Left lung (tissue), 14 donors: ENCODE measurements at regions of chr16 and their contacts with region 1.

Region 1: DNA sequence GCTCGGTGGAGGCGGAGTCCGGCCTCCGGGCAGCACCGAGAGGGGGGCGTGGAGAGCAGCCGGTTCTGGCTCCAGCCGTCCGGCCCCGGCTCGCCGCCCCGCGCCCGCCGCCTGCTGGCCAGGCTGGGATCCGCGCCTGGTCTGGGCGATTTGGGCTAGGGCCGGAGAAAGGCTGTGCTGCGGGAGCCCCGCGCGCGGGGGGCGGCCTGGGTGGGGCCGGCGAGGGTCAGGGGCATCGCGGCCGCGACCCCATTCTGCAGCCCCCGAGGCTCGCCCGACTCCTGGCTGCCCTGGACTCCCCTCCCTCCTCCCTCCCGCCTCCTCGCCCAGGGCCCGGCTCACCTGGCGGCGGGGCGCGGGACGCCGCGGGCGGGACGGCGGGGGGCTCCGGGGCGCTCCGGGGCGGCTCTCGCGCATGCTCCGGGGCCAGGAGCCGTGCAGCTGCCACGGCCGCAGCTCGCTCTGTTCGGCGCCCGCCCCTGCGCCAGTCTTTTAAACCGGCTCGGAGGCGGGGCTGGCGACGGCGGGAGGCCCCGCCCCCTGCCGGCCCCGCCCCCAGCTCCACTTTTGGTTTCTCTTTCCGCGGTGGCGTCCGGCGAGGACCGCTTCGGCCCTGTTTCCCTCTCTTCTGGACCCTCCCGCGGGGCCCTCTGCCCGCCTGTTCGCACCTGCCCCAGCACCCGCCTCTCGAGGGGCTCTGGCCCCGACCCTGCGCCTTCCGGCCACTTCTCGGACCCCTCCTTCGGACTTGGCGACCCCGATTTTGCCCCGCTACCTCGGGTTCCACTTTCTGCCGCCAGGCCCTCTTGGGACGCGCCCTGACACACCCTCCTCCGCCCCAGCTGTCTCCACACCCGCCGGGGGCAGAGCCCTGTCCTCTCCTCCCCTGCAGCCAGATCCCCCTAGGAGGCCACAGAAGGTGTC is at the start of gene SOCS1:
- DNase-seq: peak; percentile 89 to 97 (median 91)
- ATAC-seq: peak; percentile 77
- H3K4me3 ChIP-seq: peak within 1 kb of the TSS; percentile 74 to 92
- H3K27ac ChIP-seq: peak within 1 kb of the TSS; percentile 96
- H3K4me1 ChIP-seq: peaks cover 25 to 57% of the 10 kb centered on the region in 2 donors
- H3K27me3 ChIP-seq: peaks cover 0 to 7% of the 10 kb centered on the region in 2 donors
- CTCF ChIP-seq: peak; percentile 89 to 91
- polyA plus RNA-seq, gene SOCS1: 12.1 to 27.4 (median 22.7) TPM

Region 2: GRCh38 chr16:10776280-10776679 is 479.7 kb before region 1 on chr16:
- intact Hi-C with region 1: no loop called
- DNase-seq: no peak
- ATAC-seq: no peak
- H3K4me3 ChIP-seq: no peak overlapping the region
- H3K27ac ChIP-seq: no peak overlapping the region
- H3K4me1 ChIP-seq: peaks cover 0 to 21% of the 10 kb centered on the region in 2 donors
- H3K27me3 ChIP-seq: no peaks in the 10 kb centered on the region
- CTCF ChIP-seq: no peak

Region 3: GRCh38 chr16:10971560-10971961 is 284.4 kb before region 1 on chr16:
- intact Hi-C with region 1: loop called in 1 of 2 experiments (anchors 2 kb)
- DNase-seq: peak in 2 of 4 donors; percentile 84 to 91
- ATAC-seq: peak; percentile 91
- H3K4me3 ChIP-seq: no peak overlapping the region
- H3K27ac ChIP-seq: peak overlapping the region in 1 of 2 donors; percentile 47
- H3K4me1 ChIP-seq: peaks cover 10 to 32% of the 10 kb centered on the region in 2 donors
- H3K27me3 ChIP-seq: no peaks in the 10 kb centered on the region
- CTCF ChIP-seq: peak; percentile 48 to 72

Region 4: GRCh38 chr16:11114366-11115164 is 141.4 kb before region 1 on chr16:
- intact Hi-C with region 1: loop called in 1 of 2 experiments (anchors 10 kb)
- DNase-seq: no peak
- ATAC-seq: no peak
- H3K4me3 ChIP-seq: no peak overlapping the region
- H3K27ac ChIP-seq: peak overlapping the region in 1 of 2 donors; percentile 63
- H3K4me1 ChIP-seq: peaks cover 2 to 19% of the 10 kb centered on the region in 2 donors
- H3K27me3 ChIP-seq: no peaks in the 10 kb centered on the region
- CTCF ChIP-seq: no peak

Region 5: GRCh38 chr16:11354733-11355574 is 99.0 kb after region 1 on chr16:
- intact Hi-C with region 1: no loop called
- DNase-seq: peak in 3 of 4 donors; percentile 59 to 82 (median 67)
- ATAC-seq: peak; percentile 8
- H3K4me3 ChIP-seq: no peak overlapping the region
- H3K27ac ChIP-seq: peak overlapping the region; percentile 55 to 81
- H3K4me1 ChIP-seq: peaks cover 16 to 57% of the 10 kb centered on the region in 2 donors
- H3K27me3 ChIP-seq: peaks cover 0 to 23% of the 10 kb centered on the region in 2 donors
- CTCF ChIP-seq: no peak